SK-N-SH (cell line): ENCODE measurements at regions of chr1 and their contacts with region 1.

Region 1: DNA sequence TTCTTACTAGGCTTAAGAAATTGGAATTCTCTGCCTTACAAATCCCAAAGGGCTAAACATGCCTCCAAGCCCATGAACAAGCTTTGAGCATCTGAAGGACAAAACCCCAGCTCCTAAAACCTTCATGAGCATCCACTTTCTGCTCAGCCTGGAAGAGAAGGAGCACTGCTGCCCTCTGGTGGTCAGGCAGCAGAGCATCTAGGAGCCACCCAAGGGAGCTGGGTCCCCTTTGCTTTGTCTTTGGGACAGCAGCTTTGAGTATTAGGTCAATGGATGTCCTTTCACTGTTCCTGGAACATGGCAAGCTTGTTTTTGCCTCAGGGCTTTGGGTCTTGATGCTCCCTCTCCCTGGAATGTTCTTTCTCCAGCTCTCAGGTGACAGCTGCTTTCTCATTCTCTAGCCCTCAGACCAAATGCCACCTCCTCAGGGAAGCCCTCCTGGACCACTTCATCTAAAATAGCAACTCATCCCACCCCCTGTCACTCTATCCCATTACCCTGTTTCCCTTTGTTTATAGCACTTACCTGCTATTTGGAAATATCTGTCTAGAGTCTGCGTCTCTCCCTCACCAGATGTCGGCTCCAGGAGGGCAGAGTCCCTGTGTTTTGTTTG is 25.7 kb downstream of the RAB7B start:
- DNase-seq: peak; percentile 82
- H3K4me3 ChIP-seq: peak overlapping the region in 1 of 2 experiments; percentile 22; a peak in 1 of 4 replicates
- H3K27ac ChIP-seq: no peak overlapping the region
- H3K4me1 ChIP-seq: peaks cover 0 to 12% of the 10 kb centered on the region in 2 experiments; a peak in 1 of 4 replicates
- H3K27me3 ChIP-seq: no peaks in the 10 kb centered on the region
- CTCF ChIP-seq: peak; percentile 97
- EP300 ChIP-seq: no peak
- RAD21 ChIP-seq: peak; percentile 96

Region 2: DNA sequence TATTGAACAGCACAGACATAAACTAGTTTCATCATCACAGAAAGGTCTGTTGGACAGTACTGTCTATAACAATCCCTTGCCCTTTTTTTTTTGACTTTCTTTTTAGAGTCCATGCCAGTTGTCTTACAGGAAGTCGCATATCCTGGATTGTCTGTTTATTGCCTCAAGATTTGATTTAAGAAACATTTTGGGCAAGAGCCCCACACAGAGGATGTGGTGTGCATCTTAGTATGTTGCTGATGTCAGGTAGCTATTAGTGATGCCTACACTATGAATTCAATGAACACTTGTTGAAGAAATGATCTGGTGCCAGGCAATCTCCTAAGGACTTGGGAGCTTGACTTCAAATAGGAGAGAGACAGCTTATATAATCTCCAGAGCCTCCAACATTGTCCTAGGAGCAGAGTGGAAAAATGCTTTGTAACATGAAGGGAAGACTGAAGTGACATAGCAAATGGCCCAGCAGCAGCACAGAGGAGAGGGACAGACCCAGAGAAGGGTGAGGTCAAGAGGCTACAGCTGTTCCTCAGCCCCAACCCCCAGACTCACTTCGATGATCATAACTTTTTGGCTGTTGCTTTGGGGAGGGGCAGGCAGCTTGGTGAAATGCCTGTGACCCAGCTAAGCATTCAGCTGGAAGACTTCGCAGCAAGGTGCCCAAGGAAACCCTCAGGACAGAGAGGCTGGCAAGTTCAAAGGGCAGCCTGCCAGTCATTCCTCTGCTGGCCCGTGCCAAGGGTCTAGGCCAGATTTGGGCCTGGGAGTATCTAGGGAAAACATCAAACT is 194.7 kb before region 1 on chr1:
- CTCF ChIA-PET with region 1: interaction called, 366 read pairs
- POLR2A ChIA-PET with region 1: no interaction called
- DNase-seq: no peak
- H3K4me3 ChIP-seq: no peak overlapping the region
- H3K27ac ChIP-seq: no peak overlapping the region
- H3K4me1 ChIP-seq: peaks cover 0 to 5% of the 10 kb centered on the region in 2 experiments; a peak in 1 of 4 replicates
- H3K27me3 ChIP-seq: no peaks in the 10 kb centered on the region
- CTCF ChIP-seq: no peak
- EP300 ChIP-seq: no peak
- RAD21 ChIP-seq: no peak

Region 3: GRCh38 chr1:205826016-205826806 is 151.3 kb before region 1 on chr1:
- CTCF ChIA-PET with region 1: interaction called, 11 read pairs
- POLR2A ChIA-PET with region 1: no interaction called
- DNase-seq: no peak
- H3K4me3 ChIP-seq: no peak overlapping the region
- H3K27ac ChIP-seq: no peak overlapping the region
- H3K4me1 ChIP-seq: peaks cover 0 to 2% of the 10 kb centered on the region in 2 experiments; a peak in 1 of 4 replicates
- H3K27me3 ChIP-seq: no peaks in the 10 kb centered on the region
- CTCF ChIP-seq: no peak
- EP300 ChIP-seq: no peak
- RAD21 ChIP-seq: no peak

Region 4: DNA sequence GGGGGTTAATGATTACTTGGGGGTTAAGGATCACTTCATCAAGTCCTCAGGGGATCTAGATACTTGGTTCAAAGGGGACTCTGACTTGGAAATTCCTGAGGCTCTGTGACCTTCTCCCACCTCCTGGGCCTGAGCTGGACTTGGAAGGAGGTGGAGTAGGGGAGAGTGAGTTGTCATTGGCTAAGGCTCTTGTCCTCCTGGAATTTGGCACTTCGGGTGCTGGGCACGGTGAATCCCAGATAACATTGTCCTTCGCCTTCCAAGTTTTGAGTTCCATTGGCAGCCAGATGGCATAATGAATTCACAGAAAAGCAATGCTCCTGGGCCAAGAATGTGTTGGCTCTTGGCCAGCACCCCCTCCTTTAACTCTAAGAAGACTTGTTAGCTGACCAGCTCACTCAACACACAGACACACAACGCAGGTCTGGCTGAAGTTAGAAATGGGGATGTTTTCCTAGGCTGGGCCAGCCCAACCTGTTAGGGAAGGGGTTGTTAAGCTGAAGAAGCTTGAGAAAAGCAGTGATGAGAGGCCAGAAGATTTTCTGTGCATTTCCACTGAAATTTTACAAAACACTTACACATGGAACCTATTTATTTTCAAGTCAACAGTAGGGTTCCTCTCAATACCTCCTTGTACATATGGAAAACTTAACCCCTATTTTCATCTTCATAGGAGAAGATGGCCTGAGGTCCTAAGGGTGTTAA is 63.9 kb before region 1 on chr1:
- CTCF ChIA-PET with region 1: interaction called, 271 read pairs
- POLR2A ChIA-PET with region 1: interaction called, 10 read pairs
- DNase-seq: peak; percentile 5
- H3K4me3 ChIP-seq: no peak overlapping the region
- H3K27ac ChIP-seq: peak overlapping the region in 1 of 2 experiments; percentile 23; a peak in 1 of 4 replicates
- H3K4me1 ChIP-seq: peaks cover 0 to 17% of the 10 kb centered on the region in 2 experiments; a peak in 1 of 4 replicates
- H3K27me3 ChIP-seq: no peaks in the 10 kb centered on the region
- CTCF ChIP-seq: no peak
- EP300 ChIP-seq: no peak
- RAD21 ChIP-seq: no peak

Region 5: DNA sequence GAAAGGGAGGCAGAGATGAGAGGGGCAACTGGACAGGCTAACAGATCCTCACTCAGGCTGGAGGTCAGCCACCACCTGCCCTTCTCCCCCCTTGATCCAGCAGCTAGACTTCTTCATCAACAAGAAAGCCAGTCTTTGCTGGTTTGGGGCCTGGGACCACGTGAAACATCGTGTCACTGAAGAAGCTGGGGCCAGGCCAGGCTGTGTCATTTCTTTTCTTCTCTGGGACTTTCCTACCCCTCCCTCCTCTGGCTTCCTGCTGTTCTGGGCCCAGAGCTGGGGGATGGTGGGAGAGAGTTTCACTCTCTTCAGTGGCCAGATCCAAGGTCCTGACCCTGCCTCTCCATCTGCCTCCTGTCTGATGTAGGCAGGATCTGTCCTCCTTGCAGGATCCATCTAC is 16.1 kb before region 1 on chr1:
- CTCF ChIA-PET with region 1: interaction called, 197 read pairs
- POLR2A ChIA-PET with region 1: no interaction called
- DNase-seq: no peak
- H3K4me3 ChIP-seq: no peak overlapping the region
- H3K27ac ChIP-seq: no peak overlapping the region
- H3K4me1 ChIP-seq: no peaks in the 10 kb centered on the region
- H3K27me3 ChIP-seq: peaks cover 32% of the 10 kb centered on the region; the same call in 1 of the 2 replicates
- CTCF ChIP-seq: no peak
- EP300 ChIP-seq: no peak
- RAD21 ChIP-seq: no peak

Region 6: DNA sequence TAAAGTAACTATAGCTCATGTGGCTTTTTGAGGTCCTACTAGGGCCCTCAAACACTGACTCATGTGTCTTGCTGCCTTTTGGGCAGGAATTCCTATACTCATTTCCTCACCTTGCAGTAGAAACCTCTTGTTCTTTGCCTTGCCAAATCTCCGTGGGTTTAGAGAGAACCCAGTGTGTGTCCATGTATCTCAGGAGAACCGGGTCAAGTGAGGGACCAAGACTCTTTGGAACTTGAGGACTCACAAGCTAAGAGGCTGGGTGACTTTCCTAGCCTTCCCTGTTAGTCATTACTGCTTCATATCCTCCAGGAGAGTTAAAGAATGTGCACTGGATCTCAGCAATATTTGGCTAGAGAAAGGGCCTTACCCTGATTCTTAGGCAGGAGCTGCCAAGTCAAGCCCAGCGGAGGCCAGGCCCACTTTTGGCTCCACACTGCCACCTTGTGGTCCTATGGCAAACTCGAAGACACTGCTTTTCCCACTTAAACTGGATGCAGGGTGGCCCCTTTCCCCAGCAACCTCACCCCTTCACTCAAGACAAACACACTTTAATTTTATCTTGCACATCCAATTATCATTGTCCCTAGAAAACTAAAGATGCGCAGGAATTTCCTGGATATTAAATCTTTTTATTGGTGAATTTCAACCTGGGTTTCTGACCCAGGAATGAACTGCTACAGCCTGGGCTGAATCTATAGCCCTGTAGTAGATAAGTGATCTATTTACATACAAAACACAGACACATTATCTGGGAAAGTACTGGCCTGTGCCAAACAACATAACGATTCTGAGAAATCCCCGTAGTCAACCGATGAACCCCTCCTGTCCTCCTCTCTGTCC is 129.0 kb after region 1 on chr1:
- CTCF ChIA-PET with region 1: interaction called, 109 read pairs
- POLR2A ChIA-PET with region 1: no interaction called
- DNase-seq: peak; percentile 84
- H3K4me3 ChIP-seq: no peak overlapping the region; a peak in 1 of 4 replicates
- H3K27ac ChIP-seq: no peak overlapping the region
- H3K4me1 ChIP-seq: no peaks in the 10 kb centered on the region
- H3K27me3 ChIP-seq: peaks cover 11% of the 10 kb centered on the region; the same call in 1 of the 2 replicates
- CTCF ChIP-seq: peak; percentile 90
- EP300 ChIP-seq: no peak
- RAD21 ChIP-seq: peak; percentile 92